Thyroid gland (tissue), 4 donors: ENCODE measurements at regions of chr19 and their contacts with region 1.

Region 1: DNA sequence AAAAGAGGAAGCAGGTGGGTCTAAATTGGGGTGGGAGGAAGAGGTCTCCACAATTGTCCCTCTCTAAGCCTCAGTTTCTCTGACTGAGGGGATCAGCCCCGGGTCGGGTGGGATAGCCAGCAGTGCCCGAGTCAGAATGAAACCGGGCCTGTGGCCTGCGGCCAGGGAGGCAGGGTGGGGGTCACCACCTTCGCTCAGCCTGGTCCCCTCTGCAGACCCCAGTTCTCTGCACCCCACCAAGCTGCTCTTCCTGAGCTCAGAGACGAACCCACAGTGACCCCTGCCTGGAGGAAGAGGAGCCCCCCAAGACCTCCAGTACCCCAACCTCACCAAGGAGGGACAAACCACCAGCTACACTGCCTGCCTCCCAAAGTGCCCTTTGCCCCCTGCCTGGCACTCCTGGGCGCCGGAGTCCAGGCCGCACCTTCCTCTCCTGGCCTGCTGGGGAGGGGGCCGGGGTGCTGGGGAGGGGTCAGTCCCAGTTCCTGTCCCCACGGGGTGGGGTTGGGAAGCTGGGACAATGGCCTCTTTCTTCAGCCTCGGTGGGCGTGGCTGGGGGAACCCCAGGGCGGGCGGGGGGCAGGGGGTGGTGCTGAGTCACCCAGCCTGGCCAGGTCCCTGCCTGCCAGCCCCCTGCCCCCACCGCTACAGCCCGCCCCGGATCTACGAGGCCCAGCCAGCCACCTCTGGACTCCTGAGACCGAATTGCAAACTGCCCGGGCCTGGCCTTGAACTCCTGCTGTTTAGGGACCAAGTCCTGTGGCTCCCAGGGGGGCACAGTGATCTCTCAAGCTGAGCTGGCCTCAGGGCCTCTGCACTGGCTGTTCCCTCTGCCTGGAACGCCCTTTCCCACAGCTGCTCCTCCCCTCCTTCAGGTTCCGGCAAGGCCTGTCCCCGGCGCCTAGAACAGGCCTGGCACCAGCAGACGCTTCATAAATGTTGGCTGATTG is 14.4 kb downstream of the ZBTB7A start:
- DNase-seq: no peak
- H3K4me3 ChIP-seq: no peak overlapping the region
- H3K27ac ChIP-seq: peak overlapping the region in 1 of 3 donors; percentile 36
- H3K4me1 ChIP-seq: peaks cover 6 to 16% of the 10 kb centered on the region in 2 donors
- H3K27me3 ChIP-seq: no peaks in the 10 kb centered on the region
- CTCF ChIP-seq: no peak
- POLR2A ChIP-seq: no peak

Region 2: DNA sequence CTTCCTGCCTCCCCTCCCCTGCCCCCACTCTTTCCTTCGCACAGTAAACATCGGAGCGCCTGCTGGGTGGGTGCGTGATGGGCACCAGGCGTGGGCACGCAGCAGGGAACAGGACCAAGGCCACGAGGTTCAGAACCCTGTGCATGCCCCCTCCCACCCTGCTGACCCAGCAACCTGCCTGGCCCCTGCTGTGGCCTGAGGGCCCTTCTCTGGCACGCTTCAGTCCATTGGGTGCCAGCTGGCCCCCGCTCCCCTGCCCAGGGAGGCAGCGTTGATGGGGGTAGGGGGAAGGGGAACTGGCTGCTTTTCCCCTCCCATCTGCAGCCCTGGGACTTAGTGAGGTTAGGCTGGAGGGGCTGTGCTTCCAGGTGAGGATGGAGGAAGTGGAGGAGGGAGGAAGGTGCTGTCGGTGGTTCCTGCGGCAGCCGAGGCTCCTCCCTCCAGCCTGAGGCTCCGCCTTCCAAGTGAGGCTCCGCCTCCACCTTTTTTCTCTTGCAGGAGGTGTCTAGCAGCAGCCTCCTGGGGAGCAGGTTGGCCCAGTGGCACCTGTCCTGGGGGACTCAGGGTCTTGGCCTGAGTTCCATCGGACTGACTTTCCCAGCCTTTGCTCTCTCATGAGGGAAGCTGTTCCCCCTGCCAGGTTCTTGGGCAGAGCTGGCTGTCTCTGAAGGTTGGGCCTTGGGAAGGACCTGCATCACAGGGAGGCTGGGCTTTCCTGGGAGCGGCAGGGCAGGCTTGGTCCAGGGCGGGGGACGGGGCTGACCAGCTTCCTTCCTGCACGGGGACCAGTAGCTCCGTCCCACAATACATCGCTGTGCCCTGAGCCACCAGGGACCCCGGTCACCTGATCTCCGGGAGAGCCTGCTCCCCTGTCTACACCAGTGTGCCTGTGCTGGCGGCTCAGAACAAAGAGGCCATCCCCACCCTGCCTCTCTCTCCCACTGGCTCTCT is 37.5 kb before region 1 on chr19:
- intact Hi-C with region 1: loop called (anchors 5 kb)
- DNase-seq: no peak
- H3K4me3 ChIP-seq: no peak overlapping the region
- H3K27ac ChIP-seq: no peak overlapping the region
- H3K4me1 ChIP-seq: peaks cover 0 to 4% of the 10 kb centered on the region in 2 donors
- H3K27me3 ChIP-seq: no peaks in the 10 kb centered on the region
- CTCF ChIP-seq: no peak
- POLR2A ChIP-seq: no peak

Region 3: DNA sequence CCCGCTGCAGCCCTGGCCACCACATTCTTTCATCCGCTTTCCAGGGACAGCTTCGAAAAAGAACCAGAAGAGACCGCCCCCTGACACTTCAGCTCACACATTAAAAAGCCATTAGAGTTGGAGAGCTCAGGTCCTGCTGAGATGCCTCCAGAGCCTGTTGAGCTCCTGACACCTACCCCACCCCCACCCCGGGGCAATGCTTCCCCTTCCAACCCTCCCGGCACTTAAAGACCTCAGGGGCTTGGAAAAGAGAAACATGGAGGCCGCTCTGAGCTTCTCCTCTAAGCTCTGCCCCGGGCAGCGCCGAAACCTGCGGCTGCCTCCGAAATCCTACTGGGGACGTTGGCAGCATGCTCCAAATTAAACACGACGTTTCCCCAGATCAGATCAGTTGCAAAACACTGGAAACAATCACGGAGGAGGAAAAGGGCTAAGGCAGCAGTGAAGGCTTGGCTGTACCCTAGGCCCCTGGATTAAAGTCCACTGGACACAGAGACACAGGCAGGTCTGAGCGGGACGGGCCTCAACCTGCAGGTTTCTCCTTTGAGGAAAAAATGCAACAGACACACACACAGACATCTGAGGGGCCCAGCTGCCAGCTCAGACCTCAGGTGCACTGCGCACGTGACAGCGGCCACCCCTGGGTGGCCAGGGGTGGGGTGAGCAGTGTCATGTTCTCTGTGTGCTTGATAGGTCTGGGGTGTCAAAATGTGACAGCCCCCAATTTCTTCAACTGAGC is 338.4 kb after region 1 on chr19:
- intact Hi-C with region 1: no loop called
- DNase-seq: no peak
- H3K4me3 ChIP-seq: no peak overlapping the region
- H3K27ac ChIP-seq: peak overlapping the region; percentile 52 to 84 (median 71)
- H3K4me1 ChIP-seq: peaks cover 42 to 63% of the 10 kb centered on the region in 2 donors
- H3K27me3 ChIP-seq: no peaks in the 10 kb centered on the region
- CTCF ChIP-seq: no peak
- POLR2A ChIP-seq: no peak